K562 (cell line): ENCODE measurements at regions of chr7 and their contacts with region 1.

Region 1: DNA sequence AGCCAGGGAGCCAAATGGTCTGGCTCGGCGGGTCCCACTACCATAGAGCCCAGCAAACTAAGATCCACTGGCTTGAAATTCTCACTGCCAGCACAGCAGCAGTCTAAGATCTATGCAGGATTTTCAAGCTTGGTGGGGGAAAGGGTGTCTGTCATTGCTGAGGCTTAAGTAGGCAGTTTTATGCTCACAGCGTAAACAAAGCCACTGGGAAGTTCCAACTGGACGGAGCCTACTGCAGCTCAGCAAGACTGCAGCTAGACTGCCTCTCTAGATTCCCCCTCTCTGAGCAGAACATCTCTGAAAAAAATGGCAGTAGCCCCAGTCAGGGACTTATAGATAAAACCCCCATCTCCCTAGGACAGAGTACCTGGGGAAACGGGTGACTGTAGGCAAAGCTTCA is 277.6 kb upstream of the PHF14 start:
- DNase-seq: no peak
- ATAC-seq: no peak
- H3K4me3 ChIP-seq: no peak overlapping the region
- H3K27ac ChIP-seq: no peak overlapping the region
- H3K4me1 ChIP-seq: no peaks in the 10 kb centered on the region
- H3K27me3 ChIP-seq: no peaks in the 10 kb centered on the region
- CTCF ChIP-seq: no peak
- EP300 ChIP-seq: no peak
- POLR2A ChIP-seq: no peak
- RAD21 ChIP-seq: no peak

Region 2: DNA sequence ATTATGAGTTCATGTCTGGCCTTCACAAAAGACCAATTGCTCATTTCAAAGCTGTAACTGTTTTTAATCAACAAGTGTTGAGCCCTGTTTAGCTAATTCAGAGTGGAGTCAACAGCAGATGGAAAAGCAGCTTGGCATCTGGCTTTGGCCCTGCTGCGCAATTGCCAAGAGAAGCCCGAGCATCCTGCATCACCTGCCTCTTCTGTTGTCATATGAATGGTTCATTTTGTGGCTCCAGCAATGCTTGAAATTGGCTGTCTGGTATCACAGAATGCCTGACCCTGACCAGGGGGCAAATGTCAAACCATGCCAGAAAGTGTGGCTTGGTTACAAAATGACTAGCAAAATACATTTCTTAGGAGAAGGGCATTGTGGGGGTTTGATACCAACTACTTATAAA is 18.9 kb before region 1 on chr7:
- CTCF ChIA-PET with region 1: no interaction called
- POLR2A ChIA-PET with region 1: interaction called, 10 read pairs
- in situ Hi-C with region 1: no loop called
- intact Hi-C with region 1: no loop called
- DNase-seq: no peak
- ATAC-seq: no peak
- H3K4me3 ChIP-seq: no peak overlapping the region
- H3K27ac ChIP-seq: no peak overlapping the region
- H3K4me1 ChIP-seq: no peaks in the 10 kb centered on the region
- H3K27me3 ChIP-seq: no peaks in the 10 kb centered on the region
- CTCF ChIP-seq: no peak
- EP300 ChIP-seq: no peak
- POLR2A ChIP-seq: no peak
- RAD21 ChIP-seq: no peak

Region 3: DNA sequence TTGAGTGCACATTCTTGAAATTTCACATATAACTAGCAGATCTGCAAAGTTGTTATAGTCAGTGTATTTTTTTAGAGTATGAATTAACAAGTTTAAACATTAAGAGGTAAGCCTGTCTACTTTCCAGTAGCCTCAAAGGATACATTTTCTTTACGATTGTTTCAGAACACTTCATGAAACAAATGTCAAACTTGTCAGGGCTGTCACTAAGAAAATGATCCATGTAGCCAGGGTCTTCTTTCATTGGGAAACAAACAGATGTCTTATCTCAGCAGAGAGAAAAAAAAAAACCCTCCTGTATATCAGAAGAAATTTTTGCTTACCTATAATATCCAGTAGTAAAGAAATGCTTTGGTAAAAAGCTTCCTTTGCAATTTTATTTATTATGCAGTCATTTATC is 470.0 kb after region 1 on chr7:
- CTCF ChIA-PET with region 1: no interaction called
- POLR2A ChIA-PET with region 1: no interaction called
- in situ Hi-C with region 1: no loop called
- intact Hi-C with region 1: no loop called
- DNase-seq: no peak
- ATAC-seq: no peak
- H3K4me3 ChIP-seq: no peak overlapping the region
- H3K27ac ChIP-seq: no peak overlapping the region
- H3K4me1 ChIP-seq: no peaks in the 10 kb centered on the region
- H3K27me3 ChIP-seq: no peaks in the 10 kb centered on the region
- CTCF ChIP-seq: no peak
- EP300 ChIP-seq: no peak
- POLR2A ChIP-seq: no peak
- RAD21 ChIP-seq: no peak